ENCODE measurements at regions of chr3 and their contacts with region 1.

Region 1: GRCh38 chr3:179147873-179148615 is at the start of gene PIK3CA:
- DNase-seq: peak; percentile 94 to 99 (median 96)

Region 2: GRCh38 chr3:179015551-179016020 is 132.5 kb before region 1 on chr3:
- intact Hi-C with region 1: loop called (anchors 5 kb)
- DNase-seq: peak in 1 of 10 donors; percentile 38

Region 3: GRCh38 chr3:179071550-179072397 is 76.3 kb before region 1 on chr3 and contains the start of gene ZMAT3:
- intact Hi-C with region 1: loop called (anchors 5 kb)
- DNase-seq: peak; percentile 83 to 98 (median 88)

Region 4: DNA sequence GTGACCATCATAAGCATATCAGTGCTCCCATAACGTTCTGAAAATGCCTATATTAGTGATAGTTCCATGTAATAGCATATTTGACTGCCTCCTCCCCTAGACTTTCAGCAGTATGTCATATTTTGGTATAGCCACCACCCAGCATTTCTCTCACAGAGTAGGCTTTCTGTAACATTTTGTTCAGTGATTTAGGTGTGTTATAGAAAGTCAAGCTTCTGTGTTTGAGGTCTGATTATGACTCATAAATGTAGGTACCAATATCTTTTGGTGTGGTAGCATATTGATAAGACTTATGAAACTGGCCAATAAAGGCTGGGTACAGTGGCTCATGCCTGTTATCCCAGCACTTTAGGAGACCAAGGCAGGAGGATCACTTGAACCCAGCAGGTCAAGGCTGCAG is 42.2 kb before region 1 on chr3:
- intact Hi-C with region 1: loop called (anchors 2 kb)
- DNase-seq: no peak

Region 5: GRCh38 chr3:179260949-179261765 is 113.1 kb after region 1 on chr3:
- intact Hi-C with region 1: loop called (anchors 2 kb)
- DNase-seq: peak; percentile 34 to 93 (median 64)

Region 6: GRCh38 chr3:179322286-179323196 is 174.5 kb after region 1 on chr3 and contains the start of gene ZNF639:
- intact Hi-C with region 1: loop called (anchors 1 kb)
- DNase-seq: peak; percentile 52 to 96 (median 71)

Region 7: GRCh38 chr3:179347345-179348194 is 199.5 kb after region 1 on chr3 and contains the start of gene MFN1:
- intact Hi-C with region 1: loop called (anchors 1 kb)
- DNase-seq: peak; percentile 90 to 99 (median 93)